ENCODE measurements at regions of chr17 and their contacts with region 1.

Region 1: GRCh38 chr17:4980644-4981216 is 6.7 kb downstream of the CAMTA2 start:
- DNase-seq: no peak
- ATAC-seq: peak; percentile 64 to 87 (median 72)
- H3K4me3 ChIP-seq: no peak overlapping the region
- H3K27ac ChIP-seq: peak overlapping the region; percentile 23
- H3K4me1 ChIP-seq: peaks cover 5% of the 10 kb centered on the region
- H3K27me3 ChIP-seq: no peaks in the 10 kb centered on the region
- CTCF ChIP-seq: peak; percentile 69

Region 2: DNA sequence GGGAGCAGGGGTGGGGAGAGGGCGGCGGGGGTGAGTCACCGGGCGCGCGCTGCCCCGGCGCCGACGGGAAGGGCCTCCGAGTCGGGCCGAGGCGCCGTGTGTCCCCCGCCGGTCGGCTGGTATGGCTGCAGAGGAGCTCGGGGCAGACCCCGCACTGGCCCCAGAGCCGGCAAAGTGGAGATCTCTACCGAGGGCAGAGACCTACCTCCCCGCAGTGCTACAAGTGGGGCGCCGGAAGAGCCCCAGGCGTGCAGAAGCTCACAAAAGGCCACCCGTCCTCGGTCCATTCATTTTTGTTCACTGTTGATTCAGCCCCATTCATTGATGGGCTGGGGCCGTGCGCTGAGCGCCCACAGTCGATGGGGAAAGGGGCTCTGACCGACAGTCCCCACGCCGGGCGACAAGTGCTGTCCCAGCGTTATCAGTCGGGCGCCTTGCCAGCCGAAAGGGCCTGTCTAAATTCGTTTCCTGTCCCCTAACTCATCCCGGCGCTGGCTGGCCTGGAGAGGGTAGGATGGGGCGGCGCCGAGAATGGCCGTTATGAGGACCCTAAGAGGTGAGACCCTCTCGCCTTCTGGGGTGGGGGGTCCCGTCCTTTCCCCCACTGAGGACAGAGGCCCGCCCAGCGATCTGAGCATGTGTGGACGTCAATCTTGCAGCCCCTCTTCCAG is 30.5 kb before region 1 on chr17:
- intact Hi-C with region 1: no loop called
- DNase-seq: peak; percentile 77 to 85
- ATAC-seq: peak; percentile 54 to 62 (median 56)
- H3K4me3 ChIP-seq: peak overlapping the region; percentile 97
- H3K27ac ChIP-seq: peak overlapping the region; percentile 96
- H3K4me1 ChIP-seq: peaks cover 43% of the 10 kb centered on the region
- H3K27me3 ChIP-seq: no peaks in the 10 kb centered on the region
- CTCF ChIP-seq: no peak

Region 3: DNA sequence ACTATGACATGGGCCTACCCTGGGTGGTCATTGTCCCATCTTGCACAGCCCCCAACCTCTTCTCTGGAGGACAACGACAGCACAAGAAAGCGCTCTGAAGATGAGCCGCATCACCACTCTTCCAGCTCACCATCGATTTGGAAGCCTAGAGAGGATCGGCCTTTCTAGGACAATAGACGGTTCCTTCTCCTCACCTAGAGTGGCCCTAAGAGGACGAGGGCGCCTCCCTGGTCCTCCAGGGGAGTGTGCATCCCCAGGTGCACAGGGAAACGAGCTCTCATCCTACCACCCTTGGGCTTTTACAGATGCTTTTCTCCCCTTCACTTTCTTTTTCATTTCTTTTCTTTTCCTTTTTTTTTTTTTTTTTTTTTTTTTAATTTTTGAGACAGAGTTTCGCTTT is 74.8 kb after region 1 on chr17:
- intact Hi-C with region 1: loop called in 1 of 2 experiments (anchors 5 kb)
- DNase-seq: no peak
- ATAC-seq: no peak
- H3K4me3 ChIP-seq: no peak overlapping the region
- H3K27ac ChIP-seq: no peak overlapping the region
- H3K4me1 ChIP-seq: no peaks in the 10 kb centered on the region
- H3K27me3 ChIP-seq: no peaks in the 10 kb centered on the region
- CTCF ChIP-seq: no peak

Region 4: DNA sequence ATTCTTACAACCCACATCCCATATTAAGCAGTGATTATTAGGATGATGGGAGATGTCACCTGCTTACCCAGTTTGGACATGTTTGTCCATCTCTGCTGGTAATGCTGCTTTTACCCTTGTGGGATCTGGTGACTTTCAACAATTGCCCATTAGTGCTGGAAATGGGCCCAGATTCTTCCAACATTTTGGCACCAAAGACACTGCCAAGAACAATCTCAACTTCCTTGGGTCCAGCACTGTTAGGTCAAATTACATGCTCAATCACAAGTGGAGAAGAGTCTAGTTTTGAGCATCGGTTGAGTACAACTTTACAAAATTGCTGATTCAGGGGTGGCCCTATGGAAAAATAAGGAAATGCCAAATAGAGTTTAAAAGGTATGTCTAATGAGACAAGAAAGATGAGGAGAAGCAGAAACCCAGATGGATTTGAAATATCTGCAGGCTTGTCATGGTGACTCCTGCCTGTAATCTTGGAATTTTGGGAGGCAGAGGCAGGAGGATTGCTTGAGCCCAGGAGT is 84.6 kb after region 1 on chr17:
- intact Hi-C with region 1: loop called (anchors 2 to 5 kb)
- DNase-seq: no peak
- ATAC-seq: no peak
- H3K4me3 ChIP-seq: no peak overlapping the region
- H3K27ac ChIP-seq: no peak overlapping the region
- H3K4me1 ChIP-seq: no peaks in the 10 kb centered on the region
- H3K27me3 ChIP-seq: no peaks in the 10 kb centered on the region
- CTCF ChIP-seq: no peak

Measured in psoas muscle (tissue), 8 donors.